ENCODE measurements at regions of chr2 and their contacts with region 1.

Region 1: DNA sequence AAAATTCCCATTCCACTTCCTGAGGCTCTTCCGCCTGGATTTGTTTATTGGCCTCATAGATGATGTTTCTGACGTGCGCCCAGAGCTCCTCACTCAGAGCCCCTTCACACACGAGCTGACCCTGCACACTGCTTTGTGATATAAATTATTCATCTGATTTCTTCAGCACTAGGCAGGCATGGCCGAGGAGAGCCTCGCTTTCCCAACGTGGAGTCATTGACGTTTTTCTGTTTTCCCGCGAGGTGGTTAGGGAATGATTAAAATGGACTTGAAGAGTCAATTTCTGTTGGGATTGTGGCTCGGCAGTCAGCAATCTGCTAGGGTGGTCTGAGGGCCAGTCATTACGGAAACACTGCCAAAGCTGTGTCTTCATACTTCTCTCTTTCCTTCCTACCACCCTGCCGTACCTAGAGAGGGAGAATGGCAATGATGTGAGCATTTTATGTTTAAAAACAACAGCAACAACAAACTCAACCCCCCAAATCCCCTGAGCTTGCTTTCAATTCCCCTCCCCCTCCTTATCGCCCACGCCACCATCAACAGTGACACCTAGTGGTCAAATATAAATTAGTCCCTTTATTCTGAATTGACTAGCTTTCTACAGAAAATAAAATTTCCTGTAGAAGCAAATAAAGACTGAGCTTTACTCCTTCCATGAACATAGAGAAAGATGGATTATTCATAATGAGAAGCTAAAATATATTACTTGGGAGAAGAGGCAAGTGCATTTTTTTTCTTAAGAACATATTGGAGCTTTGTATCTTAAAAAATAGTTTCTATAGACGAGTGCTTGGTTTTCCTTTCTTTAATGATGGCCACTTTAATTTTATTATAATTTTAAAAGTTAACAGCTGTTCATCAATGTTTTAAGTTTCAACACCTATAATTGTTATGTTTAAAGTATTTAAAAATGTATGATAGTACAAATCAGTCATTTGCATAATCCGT is 285.1 kb downstream of the MTX2 start:
- DNase-seq: peak; percentile 47
- ATAC-seq: peak; percentile 62
- H3K4me3 Mint-ChIP-seq: peak overlapping the region; percentile 63
- H3K27ac Mint-ChIP-seq: no peak overlapping the region
- H3K4me1 Mint-ChIP-seq: peaks cover 12% of the 10 kb centered on the region
- H3K27me3 Mint-ChIP-seq: peaks cover 43% of the 10 kb centered on the region

Region 2: DNA sequence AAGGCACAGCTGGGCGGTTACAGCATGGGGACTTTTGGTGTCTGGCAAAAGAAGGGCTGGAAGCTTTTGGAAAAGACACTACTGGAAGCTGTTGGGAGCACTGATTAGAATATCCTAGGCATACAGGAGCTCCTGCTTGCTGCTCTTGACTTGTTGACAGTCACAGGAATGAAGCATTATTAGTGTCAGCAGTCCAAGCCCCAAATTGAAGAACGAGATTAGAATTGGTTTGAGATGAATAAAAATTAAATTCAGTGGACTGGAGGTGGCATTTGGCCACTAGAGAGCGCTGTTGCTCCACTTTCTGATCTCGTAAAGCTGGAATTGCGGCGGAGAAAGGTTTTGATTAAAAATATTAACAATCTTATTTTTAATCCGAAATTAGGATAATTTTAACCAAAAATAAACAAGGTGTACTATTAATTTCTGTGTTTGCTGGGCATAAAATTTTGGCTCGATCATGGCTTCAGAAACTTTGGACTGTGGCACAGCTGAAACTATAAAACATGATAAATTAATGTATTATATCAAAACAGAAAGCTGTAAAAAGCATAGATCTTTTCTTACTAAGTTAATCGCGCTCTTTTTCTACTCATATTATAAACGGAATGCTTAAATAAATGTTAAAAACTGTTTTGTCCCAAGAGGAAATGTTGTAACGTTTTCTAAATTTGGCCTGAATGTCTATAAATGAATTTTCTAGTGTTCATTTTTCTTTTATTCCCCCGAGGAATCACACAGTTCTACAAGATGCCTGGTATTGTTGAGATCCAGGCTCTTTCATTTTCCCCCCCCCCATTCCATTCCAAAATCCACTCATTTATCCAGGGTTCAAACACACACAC is 427.2 kb before region 1 on chr2:
- CTCF ChIA-PET with region 1: interaction called, 37 read pairs
- POLR2A ChIA-PET with region 1: no interaction called
- DNase-seq: peak; percentile 75
- ATAC-seq: no peak
- H3K4me3 Mint-ChIP-seq: no peak overlapping the region
- H3K27ac Mint-ChIP-seq: no peak overlapping the region
- H3K4me1 Mint-ChIP-seq: peaks cover 16% of the 10 kb centered on the region
- H3K27me3 Mint-ChIP-seq: peaks cover 73% of the 10 kb centered on the region

Region 3: DNA sequence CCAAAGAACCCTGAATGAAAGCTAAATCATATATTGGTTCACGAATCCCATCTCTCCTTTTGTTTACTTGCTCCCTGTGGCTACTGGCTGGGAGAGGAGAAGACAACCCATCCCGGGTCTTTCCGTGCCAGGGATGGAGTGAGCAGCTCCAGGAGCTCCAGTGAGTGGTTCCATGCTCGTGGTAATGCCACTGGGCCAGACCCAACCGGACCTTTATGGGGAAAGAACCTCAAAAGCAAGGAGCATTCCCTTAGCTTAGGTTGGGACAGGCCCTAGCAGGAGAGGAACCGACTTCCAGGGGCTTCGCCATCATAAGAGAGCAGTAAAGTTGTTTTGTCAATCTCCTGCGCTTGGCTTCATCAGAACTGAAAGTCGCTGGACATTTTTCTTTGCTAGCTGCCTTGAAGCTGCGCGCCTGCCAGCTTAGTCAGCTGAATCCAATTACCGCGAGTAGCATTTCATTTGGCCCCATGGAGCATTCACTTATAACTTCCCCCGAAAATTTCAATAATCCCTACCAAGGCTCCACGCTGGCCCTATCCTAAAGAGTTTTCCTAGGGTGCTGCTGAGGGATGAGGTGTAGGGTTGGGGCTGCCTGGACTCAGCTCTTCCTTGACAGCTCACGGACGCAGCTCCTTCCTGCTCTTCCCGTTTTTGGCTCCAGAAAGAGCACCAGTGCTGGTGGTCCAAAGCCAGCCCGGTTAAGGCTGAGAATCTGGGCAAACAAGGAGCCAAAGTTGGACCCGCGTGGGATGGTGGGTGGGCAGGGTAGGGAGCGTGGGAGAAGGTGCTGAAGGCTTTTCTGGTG is 392.4 kb before region 1 on chr2:
- CTCF ChIA-PET with region 1: interaction called, 17 read pairs
- POLR2A ChIA-PET with region 1: no interaction called
- DNase-seq: no peak
- ATAC-seq: no peak
- H3K4me3 Mint-ChIP-seq: no peak overlapping the region
- H3K27ac Mint-ChIP-seq: no peak overlapping the region
- H3K4me1 Mint-ChIP-seq: peaks cover 13% of the 10 kb centered on the region
- H3K27me3 Mint-ChIP-seq: peaks cover 86% of the 10 kb centered on the region

Region 4: GRCh38 chr2:176333685-176334084 is 220.7 kb before region 1 on chr2:
- CTCF ChIA-PET with region 1: no interaction called
- POLR2A ChIA-PET with region 1: no interaction called
- DNase-seq: no peak
- ATAC-seq: no peak
- H3K4me3 Mint-ChIP-seq: no peak overlapping the region
- H3K27ac Mint-ChIP-seq: no peak overlapping the region
- H3K4me1 Mint-ChIP-seq: no peaks in the 10 kb centered on the region
- H3K27me3 Mint-ChIP-seq: no peaks in the 10 kb centered on the region

Region 5: GRCh38 chr2:176454893-176455811 is 99.2 kb before region 1 on chr2:
- CTCF ChIA-PET with region 1: interaction called, 31 read pairs
- POLR2A ChIA-PET with region 1: no interaction called
- DNase-seq: peak; percentile 87
- ATAC-seq: peak; percentile 65
- H3K4me3 Mint-ChIP-seq: no peak overlapping the region
- H3K27ac Mint-ChIP-seq: no peak overlapping the region
- H3K4me1 Mint-ChIP-seq: no peaks in the 10 kb centered on the region
- H3K27me3 Mint-ChIP-seq: peaks cover 14% of the 10 kb centered on the region

Region 6: DNA sequence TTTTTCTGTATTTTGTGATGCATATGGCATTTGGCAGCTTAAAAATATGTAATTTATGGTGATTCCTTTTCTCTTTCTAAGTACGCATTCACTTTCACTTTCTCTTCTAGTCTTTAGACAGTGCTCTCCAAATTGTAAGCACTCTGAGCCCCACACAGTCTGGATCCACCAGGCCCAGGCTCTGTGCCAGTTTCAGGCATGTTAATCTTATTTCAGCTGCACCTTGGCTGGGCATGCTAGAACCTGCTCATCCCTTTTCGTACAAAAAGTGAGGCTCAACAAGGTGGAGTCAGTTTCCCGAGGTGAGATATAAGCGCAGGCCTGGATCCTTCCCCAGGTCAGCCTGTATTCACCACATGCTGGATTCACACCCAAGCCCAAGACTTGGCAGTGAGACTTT is 81.2 kb before region 1 on chr2:
- CTCF ChIA-PET with region 1: interaction called, 11 read pairs
- POLR2A ChIA-PET with region 1: no interaction called
- DNase-seq: peak; percentile 44
- ATAC-seq: peak; percentile 93
- H3K4me3 Mint-ChIP-seq: peak overlapping the region; percentile 63
- H3K27ac Mint-ChIP-seq: peak overlapping the region; percentile 77
- H3K4me1 Mint-ChIP-seq: peaks cover 22% of the 10 kb centered on the region
- H3K27me3 Mint-ChIP-seq: peaks cover 5% of the 10 kb centered on the region

Region 7: DNA sequence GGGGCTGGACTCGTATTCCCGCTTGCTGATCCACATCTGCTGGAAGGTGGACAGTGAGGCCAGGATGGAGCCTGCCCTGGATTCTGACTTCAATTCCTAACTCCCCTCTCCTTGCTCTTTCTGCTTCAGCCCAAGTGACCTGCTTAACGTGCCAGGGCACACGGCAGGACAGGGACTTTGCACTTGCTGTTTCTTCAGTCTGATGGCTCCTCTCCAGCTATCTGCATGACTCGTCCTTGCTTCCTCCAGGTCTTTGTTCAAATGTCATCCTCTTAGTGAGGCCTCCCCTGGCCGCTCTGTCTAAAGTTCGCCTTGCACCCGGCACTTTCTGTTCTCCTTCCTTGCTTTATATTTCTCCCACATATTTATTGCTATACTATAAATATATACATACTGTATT is 72.4 kb after region 1 on chr2:
- CTCF ChIA-PET with region 1: no interaction called
- POLR2A ChIA-PET with region 1: no interaction called
- DNase-seq: no peak
- ATAC-seq: no peak
- H3K4me3 Mint-ChIP-seq: no peak overlapping the region
- H3K27ac Mint-ChIP-seq: no peak overlapping the region
- H3K4me1 Mint-ChIP-seq: no peaks in the 10 kb centered on the region
- H3K27me3 Mint-ChIP-seq: peaks cover 47% of the 10 kb centered on the region

Region 8: GRCh38 chr2:176638167-176639015 is 84.0 kb after region 1 on chr2:
- CTCF ChIA-PET with region 1: interaction called, 12 read pairs
- POLR2A ChIA-PET with region 1: no interaction called
- DNase-seq: peak; percentile 70
- ATAC-seq: peak; percentile 94
- H3K4me3 Mint-ChIP-seq: peak overlapping the region; percentile 61
- H3K27ac Mint-ChIP-seq: no peak overlapping the region
- H3K4me1 Mint-ChIP-seq: peaks cover 7% of the 10 kb centered on the region
- H3K27me3 Mint-ChIP-seq: peaks cover 60% of the 10 kb centered on the region

Region 9: DNA sequence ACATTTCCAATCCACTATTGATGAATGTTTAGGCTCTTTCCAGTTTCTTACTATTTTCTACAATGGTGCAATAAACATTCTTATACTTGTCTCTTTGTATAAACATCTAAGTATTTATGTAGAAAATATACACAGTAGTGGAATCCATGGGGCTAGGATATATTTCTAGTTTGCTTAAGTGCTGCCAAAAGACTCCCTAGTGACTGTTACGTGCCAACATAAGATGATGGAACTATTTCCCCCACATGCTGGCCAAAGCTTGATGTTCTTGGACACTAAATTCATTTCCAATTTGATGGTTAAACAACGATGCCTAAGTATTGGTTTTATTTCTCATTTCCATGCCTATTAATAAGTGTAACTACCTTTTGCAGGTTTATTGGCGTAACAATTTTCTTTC is 279.9 kb after region 1 on chr2:
- CTCF ChIA-PET with region 1: no interaction called
- POLR2A ChIA-PET with region 1: no interaction called
- DNase-seq: no peak
- ATAC-seq: no peak
- H3K4me3 Mint-ChIP-seq: no peak overlapping the region
- H3K27ac Mint-ChIP-seq: no peak overlapping the region
- H3K4me1 Mint-ChIP-seq: peaks cover 11% of the 10 kb centered on the region
- H3K27me3 Mint-ChIP-seq: no peaks in the 10 kb centered on the region

Measured in activated CD8-positive, alpha-beta T cell treated with anti-CD3 and anti-CD28 coated beads, Interleukin-2, amount 10 ng/mL, durations not matched to agents 7 days and 5 days (primary cell).